ENCODE measurements at regions of chr1 and their contacts with region 1.

Region 1: GRCh38 chr1:44721485-44722361 is 9.2 kb downstream of the RNU5D-1 start:
- DNase-seq: peak; percentile 91 to 98 (median 94)
- ATAC-seq: peak; percentile 97
- H3K4me3 ChIP-seq: no peak overlapping the region
- H3K27ac ChIP-seq: peak overlapping the region; percentile 95
- H3K4me1 ChIP-seq: peaks cover 17 to 24% of the 10 kb centered on the region in 2 experiments
- H3K27me3 ChIP-seq: peaks cover 2 to 12% of the 10 kb centered on the region in 2 experiments; a peak in 4 of 5 replicates
- CTCF ChIP-seq: no peak; a peak in 2 of 6 replicates
- EP300 ChIP-seq: peak; percentile 86
- POLR2A ChIP-seq: peak; percentile 100
- RAD21 ChIP-seq: peak in 1 of 2 experiments; percentile 56; a peak in 2 of 4 replicates

Region 2: GRCh38 chr1:44237721-44238457 is 483.8 kb before region 1 on chr1:
- CTCF ChIA-PET with region 1: no interaction called
- POLR2A ChIA-PET with region 1: no interaction called
- in situ Hi-C with region 1: no loop called
- intact Hi-C with region 1: no loop called
- DNase-seq: peak; percentile 92 to 97 (median 96)
- ATAC-seq: peak; percentile 99
- H3K4me3 ChIP-seq: no peak overlapping the region
- H3K27ac ChIP-seq: no peak overlapping the region
- H3K4me1 ChIP-seq: peaks cover 25 to 35% of the 10 kb centered on the region in 2 experiments; a peak in 4 of 5 replicates
- H3K27me3 ChIP-seq: no peaks in the 10 kb centered on the region
- CTCF ChIP-seq: peak; percentile 92 to 97 (median 94)
- EP300 ChIP-seq: peak; percentile 25; the same call in 1 of the 2 replicates
- POLR2A ChIP-seq: no peak
- RAD21 ChIP-seq: peak in 1 of 2 experiments; percentile 67; a peak in 2 of 4 replicates

Region 3: DNA sequence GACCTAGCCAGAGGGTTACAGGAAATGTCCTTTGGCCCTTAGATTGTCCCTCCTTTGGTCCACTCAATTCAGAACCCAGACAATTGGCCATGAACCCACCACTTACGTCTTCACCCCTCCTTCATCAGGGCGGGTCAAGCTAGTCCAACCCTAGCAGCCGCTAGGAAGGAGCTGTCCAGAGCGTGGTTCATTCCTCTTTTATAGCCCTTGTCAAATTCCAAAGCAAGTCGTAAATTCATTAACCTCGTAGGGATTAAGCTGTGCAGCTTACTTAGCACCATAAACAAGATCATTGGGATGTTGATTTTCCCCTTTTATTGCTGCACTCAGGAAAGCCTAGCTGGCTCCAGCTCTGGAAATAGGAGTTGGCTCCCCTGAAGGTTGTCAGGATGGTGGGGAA is 137.6 kb before region 1 on chr1:
- CTCF ChIA-PET with region 1: no interaction called
- POLR2A ChIA-PET with region 1: no interaction called
- in situ Hi-C with region 1: no loop called
- intact Hi-C with region 1: no loop called
- DNase-seq: no peak
- ATAC-seq: no peak
- H3K4me3 ChIP-seq: no peak overlapping the region
- H3K27ac ChIP-seq: no peak overlapping the region
- H3K4me1 ChIP-seq: peaks cover 0 to 3% of the 10 kb centered on the region in 2 experiments; a peak in 3 of 5 replicates
- H3K27me3 ChIP-seq: peaks cover 79 to 91% of the 10 kb centered on the region in 2 experiments
- CTCF ChIP-seq: no peak
- EP300 ChIP-seq: no peak
- POLR2A ChIP-seq: no peak
- RAD21 ChIP-seq: no peak

Region 4: DNA sequence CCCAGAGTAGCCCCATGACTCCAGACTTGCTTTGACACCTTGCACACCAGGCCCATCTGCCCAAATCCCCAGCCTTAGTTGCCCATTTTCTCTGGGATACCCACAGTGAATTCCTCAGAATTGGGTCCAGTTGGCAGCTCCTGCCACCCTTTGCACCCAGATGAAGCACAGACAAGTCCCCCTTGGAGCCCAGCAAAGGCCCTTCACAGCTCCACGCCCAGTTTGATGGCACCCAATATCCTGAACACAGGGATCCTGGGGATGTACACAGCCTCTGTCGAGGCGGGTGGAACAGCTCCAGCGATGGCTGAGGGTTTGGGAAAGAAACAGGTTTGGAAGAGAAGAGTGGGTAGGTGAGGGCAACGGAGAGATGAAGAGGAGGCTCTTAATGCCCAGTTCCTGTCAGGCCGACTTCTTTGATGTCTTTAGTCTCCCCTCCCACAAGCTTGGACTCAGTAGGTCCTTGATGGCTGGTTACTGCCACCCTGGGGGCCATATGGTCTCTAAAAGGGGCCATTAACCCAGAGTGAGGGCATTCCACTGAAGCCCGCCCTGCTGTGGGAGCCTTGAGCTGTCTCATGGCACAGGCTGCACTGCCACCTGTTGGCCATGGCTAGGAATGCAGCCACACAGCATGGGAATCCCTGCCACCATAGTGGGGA is 69.1 kb before region 1 on chr1:
- CTCF ChIA-PET with region 1: no interaction called
- POLR2A ChIA-PET with region 1: interaction called, 11 read pairs
- in situ Hi-C with region 1: no loop called
- intact Hi-C with region 1: no loop called
- DNase-seq: peak; percentile 84 to 89 (median 86)
- ATAC-seq: peak; percentile 95
- H3K4me3 ChIP-seq: no peak overlapping the region
- H3K27ac ChIP-seq: no peak overlapping the region
- H3K4me1 ChIP-seq: peaks cover 0 to 17% of the 10 kb centered on the region in 2 experiments; a peak in 2 of 5 replicates
- H3K27me3 ChIP-seq: no peaks in the 10 kb centered on the region
- CTCF ChIP-seq: peak; percentile 96 to 99 (median 98)
- EP300 ChIP-seq: no peak
- POLR2A ChIP-seq: no peak
- RAD21 ChIP-seq: peak; percentile 93 to 99

Region 5: GRCh38 chr1:44696789-44697345 is 24.9 kb before region 1 on chr1:
- CTCF ChIA-PET with region 1: no interaction called
- POLR2A ChIA-PET with region 1: interaction called, 28 read pairs
- in situ Hi-C with region 1: no loop called
- intact Hi-C with region 1: no loop called
- DNase-seq: no peak
- ATAC-seq: 0 out of 3 replicates have a peak, but pooled peaks have one; percentile 14
- H3K4me3 ChIP-seq: no peak overlapping the region
- H3K27ac ChIP-seq: no peak overlapping the region
- H3K4me1 ChIP-seq: no peaks in the 10 kb centered on the region
- H3K27me3 ChIP-seq: peaks cover 13 to 20% of the 10 kb centered on the region in 2 experiments; a peak in 4 of 5 replicates
- CTCF ChIP-seq: no peak
- EP300 ChIP-seq: no peak
- POLR2A ChIP-seq: no peak
- RAD21 ChIP-seq: no peak

Region 6: GRCh38 chr1:44775078-44775929 is 53.6 kb after region 1 on chr1 and contains the start of gene RPS8:
- CTCF ChIA-PET with region 1: no interaction called
- POLR2A ChIA-PET with region 1: interaction called, 95 read pairs
- in situ Hi-C with region 1: no loop called
- intact Hi-C with region 1: no loop called
- DNase-seq: peak; percentile 85 to 99 (median 89)
- ATAC-seq: peak; percentile 81
- H3K4me3 ChIP-seq: peak within 1 kb of the TSS; percentile 75
- H3K27ac ChIP-seq: peak within 1 kb of the TSS; percentile 98
- H3K4me1 ChIP-seq: peaks cover 13 to 22% of the 10 kb centered on the region in 2 experiments
- H3K27me3 ChIP-seq: no peaks in the 10 kb centered on the region
- CTCF ChIP-seq: 0 out of 6 replicates have a peak, but pooled peaks of 1 of the 3 experiments have one; percentile 2
- EP300 ChIP-seq: peak; percentile 44; the same call in 1 of the 2 replicates
- POLR2A ChIP-seq: peak; percentile 100
- RAD21 ChIP-seq: no peak
- polyA plus RNA-seq, gene RPS8: 2,431 to 2,562 TPM

Region 7: DNA sequence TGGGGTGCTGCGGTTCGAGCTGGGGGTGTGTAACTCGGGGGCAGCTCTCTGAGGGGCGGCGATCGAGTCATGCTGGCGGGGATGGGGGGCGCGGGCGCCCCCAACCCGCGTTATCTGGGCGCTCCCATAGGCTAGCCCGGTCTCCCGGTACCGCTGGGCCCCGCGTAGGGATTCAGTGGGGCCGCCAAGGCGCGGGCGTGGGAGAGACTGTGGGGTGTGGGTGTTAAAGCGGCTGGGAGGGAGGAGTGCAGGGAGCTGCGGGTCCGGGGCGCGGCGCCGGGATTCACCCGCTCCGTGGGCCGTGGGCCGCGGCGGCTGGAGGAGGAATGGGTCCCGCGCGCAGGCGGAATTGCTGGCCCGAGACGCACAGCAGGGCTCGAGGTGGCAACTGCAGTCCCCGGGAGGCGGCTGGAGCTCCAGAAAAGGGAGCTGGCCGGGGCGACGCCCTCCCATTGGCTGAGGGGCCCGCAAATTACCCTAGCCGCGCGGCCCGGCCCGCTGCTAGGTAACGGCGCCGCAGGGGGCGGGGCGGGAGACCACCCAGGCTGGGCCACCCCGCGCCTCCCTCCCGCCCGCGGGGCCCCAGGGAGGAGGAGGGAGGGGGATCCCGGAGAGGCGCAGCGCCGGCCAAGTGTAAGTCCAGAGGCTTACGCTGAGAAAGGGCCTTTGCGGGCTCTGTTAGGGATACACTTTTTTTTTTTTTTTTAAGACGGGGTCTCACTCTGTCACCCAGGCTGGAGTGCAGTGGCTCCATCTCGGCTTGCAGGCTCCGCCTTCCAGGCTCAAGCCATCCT is 121.3 kb after region 1 on chr1 and contains the start of gene PTCH2:
- CTCF ChIA-PET with region 1: interaction called, 3 read pairs
- POLR2A ChIA-PET with region 1: interaction called, 16 read pairs
- in situ Hi-C with region 1: no loop called
- intact Hi-C with region 1: no loop called
- DNase-seq: peak; percentile 83 to 95 (median 92)
- ATAC-seq: peak; percentile 93
- H3K4me3 ChIP-seq: peak within 1 kb of the TSS; percentile 56
- H3K27ac ChIP-seq: peak within 1 kb of the TSS; percentile 23; the same call in 1 of the 3 replicates
- H3K4me1 ChIP-seq: peaks cover 5 to 17% of the 10 kb centered on the region in 2 experiments; a peak in 3 of 5 replicates
- H3K27me3 ChIP-seq: no peaks in the 10 kb centered on the region
- CTCF ChIP-seq: no peak
- EP300 ChIP-seq: no peak
- POLR2A ChIP-seq: peak; percentile 58; the same call in 1 of the 2 replicates
- RAD21 ChIP-seq: no peak
- polyA plus RNA-seq, gene PTCH2: 0.15 to 0.25 TPM

Region 8: GRCh38 chr1:45097944-45098343 is 376.2 kb after region 1 on chr1:
- CTCF ChIA-PET with region 1: no interaction called
- POLR2A ChIA-PET with region 1: no interaction called
- in situ Hi-C with region 1: no loop called
- intact Hi-C with region 1: no loop called
- DNase-seq: peak in 1 of 4 experiments; percentile 25
- ATAC-seq: no peak
- H3K4me3 ChIP-seq: no peak overlapping the region
- H3K27ac ChIP-seq: no peak overlapping the region
- H3K4me1 ChIP-seq: no peaks in the 10 kb centered on the region
- H3K27me3 ChIP-seq: peaks cover 6 to 11% of the 10 kb centered on the region in 2 experiments; a peak in 1 of 5 replicates
- CTCF ChIP-seq: no peak
- EP300 ChIP-seq: no peak
- POLR2A ChIP-seq: no peak
- RAD21 ChIP-seq: no peak

Region 9: DNA sequence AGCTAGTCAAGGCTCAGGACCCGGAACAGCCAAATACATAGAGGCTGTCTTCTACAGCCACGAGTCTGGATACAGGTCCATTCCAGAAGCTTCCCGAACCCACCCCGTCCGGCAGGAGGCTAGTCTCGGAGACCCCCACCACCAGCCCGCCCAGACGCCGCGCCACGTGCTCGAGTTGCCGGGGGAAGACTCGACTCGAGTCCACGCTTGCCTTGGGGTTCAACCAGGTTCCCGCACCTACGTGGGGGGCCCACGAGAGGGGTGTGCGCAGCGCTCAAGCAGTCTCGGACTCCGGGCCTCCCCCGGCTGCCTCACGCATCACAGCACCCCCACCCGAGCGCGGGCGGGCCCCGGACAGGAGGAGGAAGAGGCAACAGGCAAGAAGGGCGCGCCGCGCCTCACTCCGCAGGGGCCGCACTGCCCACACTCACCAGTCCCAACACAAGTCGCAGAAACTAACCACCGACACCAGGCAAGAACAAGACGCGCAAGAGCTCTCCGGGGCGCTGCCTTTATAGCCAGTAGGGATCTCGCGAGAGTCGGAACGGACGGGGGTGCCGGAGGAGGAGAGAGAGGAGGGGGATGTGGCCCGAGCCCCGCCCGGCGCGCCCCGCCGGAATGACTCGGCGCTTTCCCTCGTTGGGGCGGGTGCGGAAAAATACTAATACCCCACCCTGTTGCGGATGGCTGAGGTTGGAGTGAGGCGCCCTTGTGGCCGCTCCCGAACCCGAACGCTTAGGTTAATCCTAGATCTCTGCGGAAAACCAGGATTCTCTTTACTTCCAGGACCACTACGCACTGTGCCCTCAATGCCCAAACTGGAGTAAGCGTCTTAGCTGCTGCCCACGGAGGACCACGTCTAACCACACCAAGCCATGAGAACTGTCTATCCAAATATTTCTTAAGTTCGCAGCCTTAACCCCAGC is 799.9 kb after region 1 on chr1 and contains the start of gene PRDX1:
- CTCF ChIA-PET with region 1: no interaction called
- POLR2A ChIA-PET with region 1: interaction called, 10 read pairs
- in situ Hi-C with region 1: no loop called
- intact Hi-C with region 1: no loop called
- DNase-seq: peak; percentile 97 to 99 (median 98)
- ATAC-seq: peak; percentile 92
- H3K4me3 ChIP-seq: peak within 1 kb of the TSS; percentile 96
- H3K27ac ChIP-seq: peak within 1 kb of the TSS; percentile 87
- H3K4me1 ChIP-seq: peaks cover 25 to 29% of the 10 kb centered on the region in 2 experiments
- H3K27me3 ChIP-seq: no peaks in the 10 kb centered on the region
- CTCF ChIP-seq: peak in 2 of 3 experiments; percentile 38 to 39; a peak in 4 of 6 replicates
- EP300 ChIP-seq: peak; percentile 66; the same call in 1 of the 2 replicates
- POLR2A ChIP-seq: peak; percentile 100
- RAD21 ChIP-seq: peak; percentile 7 to 18
- polyA plus RNA-seq, gene PRDX1: 2,282 to 2,388 TPM